ENCODE measurements at regions of chr12 and their contacts with region 1.

Region 1: GRCh38 chr12:76037130-76038103 is 5.8 kb upstream of the PHLDA1 start:
- DNase-seq: peak; percentile 61 to 77 (median 74)
- H3K4me3 ChIP-seq: no peak overlapping the region
- H3K4me3 Mint-ChIP-seq: no peak overlapping the region
- H3K27ac ChIP-seq: no peak overlapping the region
- H3K27ac Mint-ChIP-seq: peak overlapping the region in 1 of 7 donors; percentile 20
- H3K4me1 ChIP-seq: peaks cover 5 to 6% of the 10 kb centered on the region in 2 donors
- H3K4me1 Mint-ChIP-seq: peaks cover 8% of the 10 kb centered on the region
- H3K27me3 ChIP-seq: peaks cover 12 to 22% of the 10 kb centered on the region in 2 donors
- H3K27me3 Mint-ChIP-seq: peaks cover 15 to 21% (median 21%) of the 10 kb centered on the region in 3 donors
- CTCF ChIP-seq: peak; percentile 83

Region 2: GRCh38 chr12:75526655-75527511 is 510.5 kb before region 1 on chr12:
- intact Hi-C with region 1: loop called (anchors 5 kb)
- DNase-seq: peak in 2 of 3 donors; percentile 13 to 16
- H3K4me3 ChIP-seq: no peak overlapping the region
- H3K4me3 Mint-ChIP-seq: no peak overlapping the region
- H3K27ac ChIP-seq: no peak overlapping the region
- H3K27ac Mint-ChIP-seq: no peak overlapping the region
- H3K4me1 ChIP-seq: no peaks in the 10 kb centered on the region
- H3K4me1 Mint-ChIP-seq: peaks cover 4% of the 10 kb centered on the region
- H3K27me3 ChIP-seq: no peaks in the 10 kb centered on the region
- H3K27me3 Mint-ChIP-seq: peaks cover 2 to 8% (median 6%) of the 10 kb centered on the region in 3 donors
- CTCF ChIP-seq: peak; percentile 67

Region 3: DNA sequence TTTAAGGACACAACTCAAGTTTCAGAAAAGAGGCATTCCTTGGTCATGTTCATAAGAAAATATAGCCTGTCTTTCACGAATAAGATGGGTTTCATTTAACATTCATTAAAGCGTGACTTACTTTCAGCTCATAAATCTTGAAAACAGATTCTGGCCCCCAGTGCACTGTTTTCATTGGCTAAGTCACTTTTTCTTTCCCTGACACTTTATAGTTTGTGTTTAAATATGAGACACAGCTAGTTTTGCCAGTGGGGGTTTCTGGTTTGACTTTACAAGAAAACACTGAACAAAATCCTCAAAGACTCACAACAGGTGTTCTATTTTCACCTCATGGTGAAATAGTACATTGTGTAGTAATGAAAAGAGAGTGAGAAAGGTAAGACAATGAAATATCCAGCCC is 71.8 kb before region 1 on chr12:
- intact Hi-C with region 1: no loop called
- DNase-seq: no peak
- H3K4me3 ChIP-seq: no peak overlapping the region
- H3K4me3 Mint-ChIP-seq: no peak overlapping the region
- H3K27ac ChIP-seq: no peak overlapping the region
- H3K27ac Mint-ChIP-seq: peak overlapping the region in 2 of 7 donors; percentile 22 to 94
- H3K4me1 ChIP-seq: peaks cover 33 to 35% of the 10 kb centered on the region in 2 donors
- H3K4me1 Mint-ChIP-seq: peaks cover 36% of the 10 kb centered on the region
- H3K27me3 ChIP-seq: no peaks in the 10 kb centered on the region
- H3K27me3 Mint-ChIP-seq: peaks cover 0 to 6% (median 4%) of the 10 kb centered on the region in 3 donors
- CTCF ChIP-seq: no peak

Measured in CD14-positive monocyte (primary cell).